Breast epithelium (tissue), 4 donors: ENCODE measurements at regions of chr1 and their contacts with region 1.

Region 1: DNA sequence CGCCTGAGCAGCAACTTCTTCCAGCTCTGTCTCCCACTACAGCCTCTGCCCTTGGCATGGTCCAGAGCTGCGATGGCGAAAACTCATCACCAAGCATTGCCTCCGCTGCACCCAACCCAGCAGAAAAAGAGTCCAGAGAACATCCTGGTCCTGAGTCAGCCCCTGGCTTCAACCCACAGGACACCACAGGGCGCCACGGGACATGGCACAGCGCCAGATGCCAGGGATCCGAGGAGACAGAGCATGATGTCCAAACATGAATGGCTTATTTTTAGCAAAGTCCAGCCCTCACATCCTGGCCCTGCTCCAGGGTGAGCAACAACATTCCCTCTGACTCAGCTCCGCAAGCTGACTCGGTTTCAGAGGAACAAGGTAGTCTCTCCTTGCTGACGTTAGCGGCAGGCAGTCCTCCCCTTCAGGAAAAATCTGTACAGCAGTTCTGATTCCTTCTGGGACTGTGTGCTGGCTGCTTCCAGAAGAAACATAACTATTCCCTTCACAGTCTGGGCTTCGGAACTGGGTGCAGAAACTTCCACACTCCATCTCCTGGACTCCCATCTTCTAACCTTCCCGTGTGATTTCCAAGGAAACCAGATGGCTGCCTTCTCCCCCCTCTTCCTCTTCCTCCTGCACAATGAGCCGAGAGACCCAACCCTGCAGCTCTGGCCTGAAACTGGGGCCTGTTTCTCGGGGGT is 131.3 kb downstream of the TOMM20 start:
- DNase-seq: peak; percentile 100
- H3K4me3 ChIP-seq: peak overlapping the region in 2 of 3 donors; percentile 8 to 23
- H3K27ac ChIP-seq: peak overlapping the region; percentile 93 to 94
- H3K4me1 ChIP-seq: peaks cover 5 to 7% of the 10 kb centered on the region in 2 donors
- H3K27me3 ChIP-seq: no peaks in the 10 kb centered on the region
- CTCF ChIP-seq: peak in 1 of 3 donors; percentile 18
- POLR2A ChIP-seq: peak; percentile 23

Region 2: DNA sequence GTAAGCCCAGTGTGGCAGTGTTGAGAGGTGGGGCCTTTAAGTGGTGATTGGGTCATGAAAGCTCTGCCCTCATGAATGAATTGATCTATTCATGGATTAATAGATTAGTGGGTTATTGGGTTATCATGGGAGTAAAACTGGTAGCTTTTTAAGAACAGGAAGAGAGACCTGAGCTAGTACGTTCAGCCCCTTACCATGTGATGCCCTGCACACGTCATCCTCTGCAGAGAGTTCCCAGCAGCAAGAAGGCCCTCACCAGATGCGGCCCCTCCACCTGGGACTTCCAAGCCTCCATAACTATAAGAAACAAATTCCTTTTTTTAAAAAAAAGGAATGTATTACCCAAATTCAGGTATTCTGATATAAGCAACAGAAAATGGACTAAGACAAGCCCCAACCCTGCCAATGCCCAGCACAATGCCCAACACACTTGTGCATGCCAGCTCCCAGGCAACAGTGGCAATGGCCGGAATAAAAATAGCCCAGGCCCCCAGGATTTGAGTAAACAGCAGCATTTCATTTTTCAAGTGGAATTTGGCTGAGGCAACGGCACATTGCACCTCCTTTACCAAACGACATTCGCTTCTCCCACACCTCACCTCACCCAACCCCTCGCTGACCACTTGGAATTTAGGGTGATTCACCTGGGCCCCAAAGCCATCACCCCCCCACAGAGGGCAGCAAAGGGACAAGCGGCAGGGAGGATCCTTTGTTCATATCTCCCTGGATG is 84.6 kb before region 1 on chr1:
- intact Hi-C with region 1: loop called (anchors 5 kb)
- DNase-seq: no peak
- H3K4me3 ChIP-seq: no peak overlapping the region
- H3K27ac ChIP-seq: peak overlapping the region; percentile 19 to 59
- H3K4me1 ChIP-seq: no peaks in the 10 kb centered on the region
- H3K27me3 ChIP-seq: no peaks in the 10 kb centered on the region
- CTCF ChIP-seq: no peak
- POLR2A ChIP-seq: no peak